K562 (cell line): ENCODE measurements at regions of chr6 and their contacts with region 1.

Region 1: DNA sequence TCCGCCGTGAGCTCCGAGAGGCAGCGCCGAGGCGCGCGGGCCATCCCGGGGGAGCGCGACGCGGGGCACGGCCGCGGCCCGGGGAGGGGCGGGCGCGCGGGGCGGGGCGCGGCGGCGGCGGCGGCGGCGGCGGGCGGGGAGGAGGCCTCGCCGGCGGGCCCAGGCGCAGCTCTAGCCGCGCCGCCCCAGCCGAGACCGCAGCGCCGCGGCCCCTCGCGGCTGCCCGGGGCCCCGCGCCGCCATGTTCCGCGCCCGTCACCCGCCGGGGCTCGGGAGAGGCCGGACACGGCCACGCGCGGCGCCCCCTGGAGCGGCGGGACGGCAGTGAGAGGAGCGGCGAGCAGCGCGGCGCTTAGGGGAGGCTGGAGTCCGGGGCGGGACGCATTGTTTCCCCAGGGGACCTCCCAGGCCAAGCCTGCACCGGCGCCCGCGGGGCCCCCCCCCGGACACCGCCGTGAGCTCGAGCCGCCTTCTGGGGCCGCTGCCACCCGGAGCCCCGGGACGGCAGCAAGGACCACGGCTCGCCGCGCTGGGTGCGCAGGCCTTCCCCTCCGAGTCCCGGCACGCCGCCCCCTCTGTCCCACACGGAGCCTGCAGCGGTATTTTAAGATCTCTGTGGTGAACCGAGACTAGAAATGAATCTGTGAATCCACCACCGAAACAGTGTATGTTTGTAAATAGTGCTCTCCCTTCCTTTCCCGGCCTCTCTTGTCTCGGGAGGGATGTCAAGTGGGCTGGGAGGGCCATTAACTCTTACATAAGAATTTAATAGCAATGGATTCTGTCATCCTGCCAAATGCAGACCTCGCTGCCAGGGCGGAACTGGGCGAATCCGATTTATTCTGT is at the start of gene KIF13A:
- DNase-seq: peak; percentile 77 to 96 (median 92)
- ATAC-seq: peak; percentile 88
- H3K4me3 ChIP-seq: peak within 1 kb of the TSS; percentile 65
- H3K27ac ChIP-seq: peak within 1 kb of the TSS; percentile 79
- H3K4me1 ChIP-seq: peaks cover 12 to 20% of the 10 kb centered on the region in 2 experiments; a peak in 4 of 5 replicates
- H3K27me3 ChIP-seq: no peaks in the 10 kb centered on the region
- CTCF ChIP-seq: peak; percentile 32 to 45 (median 37)
- EP300 ChIP-seq: no peak; the same call in 1 of the 2 replicates
- POLR2A ChIP-seq: peak; percentile 51; the same call in 1 of the 2 replicates
- RAD21 ChIP-seq: peak; percentile 52 to 60
- polyA plus RNA-seq, gene KIF13A: 3.6 to 4.3 TPM

Region 2: GRCh38 chr6:17842014-17842776 is 145.6 kb before region 1 on chr6:
- CTCF ChIA-PET with region 1: no interaction called
- POLR2A ChIA-PET with region 1: interaction called, 3 read pairs
- in situ Hi-C with region 1: no loop called
- intact Hi-C with region 1: loop called (anchors 2 kb)
- DNase-seq: peak; percentile 33 to 82 (median 56)
- ATAC-seq: peak; percentile 80
- H3K4me3 ChIP-seq: no peak overlapping the region
- H3K27ac ChIP-seq: peak overlapping the region; percentile 60
- H3K4me1 ChIP-seq: peaks cover 14 to 47% of the 10 kb centered on the region in 2 experiments
- H3K27me3 ChIP-seq: no peaks in the 10 kb centered on the region
- CTCF ChIP-seq: no peak
- EP300 ChIP-seq: peak; percentile 52; the same call in 1 of the 2 replicates
- POLR2A ChIP-seq: no peak
- RAD21 ChIP-seq: no peak

Region 3: GRCh38 chr6:17865798-17866725 is 121.7 kb before region 1 on chr6:
- CTCF ChIA-PET with region 1: no interaction called
- POLR2A ChIA-PET with region 1: interaction called, 4 read pairs
- in situ Hi-C with region 1: no loop called
- intact Hi-C with region 1: loop called (anchors 5 kb)
- DNase-seq: peak in 1 of 4 experiments; percentile 63
- ATAC-seq: peak; percentile 21
- H3K4me3 ChIP-seq: no peak overlapping the region
- H3K27ac ChIP-seq: peak overlapping the region; percentile 13; the same call in 1 of the 3 replicates
- H3K4me1 ChIP-seq: peaks cover 19 to 57% of the 10 kb centered on the region in 2 experiments
- H3K27me3 ChIP-seq: no peaks in the 10 kb centered on the region
- CTCF ChIP-seq: no peak
- EP300 ChIP-seq: no peak
- POLR2A ChIP-seq: no peak
- RAD21 ChIP-seq: no peak

Region 4: GRCh38 chr6:17907406-17908229 is 80.2 kb before region 1 on chr6:
- CTCF ChIA-PET with region 1: no interaction called
- POLR2A ChIA-PET with region 1: no interaction called
- in situ Hi-C with region 1: no loop called
- intact Hi-C with region 1: loop called (anchors 5 kb)
- DNase-seq: peak; percentile 69 to 95 (median 80)
- ATAC-seq: peak; percentile 96
- H3K4me3 ChIP-seq: no peak overlapping the region
- H3K27ac ChIP-seq: peak overlapping the region; percentile 93
- H3K4me1 ChIP-seq: peaks cover 8 to 28% of the 10 kb centered on the region in 2 experiments; a peak in 4 of 5 replicates
- H3K27me3 ChIP-seq: no peaks in the 10 kb centered on the region
- CTCF ChIP-seq: peak; percentile 43 to 63 (median 55)
- EP300 ChIP-seq: peak; percentile 94
- POLR2A ChIP-seq: peak; percentile 60
- RAD21 ChIP-seq: peak; percentile 75 to 77

Region 5: GRCh38 chr6:17971128-17972073 is 16.4 kb before region 1 on chr6:
- CTCF ChIA-PET with region 1: no interaction called
- POLR2A ChIA-PET with region 1: interaction called, 22 read pairs
- in situ Hi-C with region 1: no loop called
- intact Hi-C with region 1: no loop called
- DNase-seq: peak in 1 of 4 experiments; percentile 91
- ATAC-seq: peak; percentile 73
- H3K4me3 ChIP-seq: no peak overlapping the region; the same call in 1 of the 2 replicates
- H3K27ac ChIP-seq: peak overlapping the region; percentile 79
- H3K4me1 ChIP-seq: peaks cover 21 to 57% of the 10 kb centered on the region in 2 experiments
- H3K27me3 ChIP-seq: no peaks in the 10 kb centered on the region
- CTCF ChIP-seq: no peak
- EP300 ChIP-seq: peak; percentile 62; the same call in 1 of the 2 replicates
- POLR2A ChIP-seq: no peak
- RAD21 ChIP-seq: 0 out of 4 replicates have a peak, but pooled peaks of 1 of the 2 experiments have one; percentile 15

Region 6: GRCh38 chr6:18155150-18155863 is 167.5 kb after region 1 on chr6 and contains the start of gene KDM1B:
- CTCF ChIA-PET with region 1: no interaction called
- POLR2A ChIA-PET with region 1: no interaction called
- in situ Hi-C with region 1: no loop called
- intact Hi-C with region 1: loop called (anchors 5 kb)
- DNase-seq: peak; percentile 99 to 100 (median 100)
- ATAC-seq: peak; percentile 96
- H3K4me3 ChIP-seq: peak within 1 kb of the TSS; percentile 74
- H3K27ac ChIP-seq: peak within 1 kb of the TSS; percentile 86
- H3K4me1 ChIP-seq: peaks cover 14 to 23% of the 10 kb centered on the region in 2 experiments
- H3K27me3 ChIP-seq: no peaks in the 10 kb centered on the region
- CTCF ChIP-seq: no peak
- EP300 ChIP-seq: no peak
- POLR2A ChIP-seq: no peak; the same call in 1 of the 2 replicates
- RAD21 ChIP-seq: no peak
- polyA plus RNA-seq, gene KDM1B: 1.4 to 1.7 TPM